ENCODE measurements at regions of chr21 and their contacts with region 1.

Region 1: DNA sequence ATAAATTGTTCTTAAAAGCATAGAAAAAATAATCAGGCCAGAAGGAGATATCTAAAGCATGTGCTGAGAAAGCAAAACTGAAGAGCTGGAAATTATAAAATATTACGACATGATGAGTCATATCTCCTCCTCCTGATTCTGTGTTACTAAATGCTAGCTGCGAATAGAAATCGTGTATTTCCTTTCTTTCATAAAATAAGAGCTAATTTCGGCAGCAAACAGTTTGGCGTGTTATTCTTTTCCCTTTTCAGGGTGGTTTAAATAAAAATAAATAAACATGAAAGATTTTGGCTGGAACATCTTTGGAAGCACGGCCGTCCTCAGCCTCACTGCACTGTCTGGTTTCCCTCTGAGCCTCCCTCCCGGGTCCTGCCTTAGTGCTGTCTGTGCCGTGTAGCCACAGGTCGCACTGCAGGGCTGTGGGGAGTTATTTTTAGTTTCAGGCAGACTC is 56.0 kb downstream of the ADARB1 start:
- DNase-seq: no peak
- H3K4me3 ChIP-seq: no peak overlapping the region
- H3K4me3 Mint-ChIP-seq: no peak overlapping the region
- H3K27ac Mint-ChIP-seq: no peak overlapping the region
- H3K4me1 ChIP-seq: no peaks in the 10 kb centered on the region
- H3K4me1 Mint-ChIP-seq: no peaks in the 10 kb centered on the region
- H3K27me3 ChIP-seq: no peaks in the 10 kb centered on the region
- H3K27me3 Mint-ChIP-seq: no peaks in the 10 kb centered on the region
- CTCF ChIP-seq: no peak

Region 2: GRCh38 chr21:44949779-44950198 is 180.6 kb before region 1 on chr21:
- CTCF ChIA-PET with region 1: interaction called, 26 read pairs
- POLR2A ChIA-PET with region 1: no interaction called
- intact Hi-C with region 1: loop called (anchors 2 kb)
- DNase-seq: peak; percentile 87 to 90
- H3K4me3 ChIP-seq: no peak overlapping the region
- H3K4me3 Mint-ChIP-seq: no peak overlapping the region
- H3K27ac Mint-ChIP-seq: no peak overlapping the region
- H3K4me1 ChIP-seq: peaks cover 5% of the 10 kb centered on the region; the same call in 1 of the 2 replicates
- H3K4me1 Mint-ChIP-seq: no peaks in the 10 kb centered on the region
- H3K27me3 ChIP-seq: no peaks in the 10 kb centered on the region
- H3K27me3 Mint-ChIP-seq: no peaks in the 10 kb centered on the region
- CTCF ChIP-seq: peak; percentile 82 to 91

Region 3: DNA sequence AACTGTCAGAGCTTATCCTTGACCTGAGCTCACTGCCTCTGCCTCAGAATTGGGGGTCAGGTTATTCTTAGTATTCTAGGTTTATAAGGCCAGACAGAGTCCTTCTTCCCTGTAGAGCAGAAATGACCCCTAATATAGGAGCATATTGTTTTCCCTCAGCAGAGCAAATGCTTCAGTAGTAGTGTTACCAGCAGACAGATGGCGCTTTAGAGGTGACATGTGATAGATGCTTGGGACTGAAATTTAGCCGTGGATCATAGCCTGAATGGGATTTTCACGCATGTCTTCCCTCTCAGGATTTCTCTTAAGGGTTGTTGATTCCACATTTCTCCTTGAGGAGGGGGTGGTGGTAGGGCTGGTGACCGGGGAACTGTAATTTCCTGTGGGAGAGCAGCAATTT is 31.5 kb before region 1 on chr21:
- CTCF ChIA-PET with region 1: interaction called, 5 read pairs
- POLR2A ChIA-PET with region 1: no interaction called
- intact Hi-C with region 1: loop called (anchors 1 kb)
- DNase-seq: no peak
- H3K4me3 ChIP-seq: no peak overlapping the region
- H3K4me3 Mint-ChIP-seq: no peak overlapping the region
- H3K27ac Mint-ChIP-seq: no peak overlapping the region
- H3K4me1 ChIP-seq: no peaks in the 10 kb centered on the region
- H3K4me1 Mint-ChIP-seq: no peaks in the 10 kb centered on the region
- H3K27me3 ChIP-seq: no peaks in the 10 kb centered on the region
- H3K27me3 Mint-ChIP-seq: no peaks in the 10 kb centered on the region
- CTCF ChIP-seq: peak; percentile 19 to 60

Region 4: GRCh38 chr21:45154511-45155508 is 24.5 kb after region 1 on chr21:
- CTCF ChIA-PET with region 1: no interaction called
- POLR2A ChIA-PET with region 1: no interaction called
- intact Hi-C with region 1: no loop called
- DNase-seq: no peak
- H3K4me3 ChIP-seq: no peak overlapping the region
- H3K4me3 Mint-ChIP-seq: no peak overlapping the region
- H3K27ac Mint-ChIP-seq: no peak overlapping the region
- H3K4me1 ChIP-seq: no peaks in the 10 kb centered on the region
- H3K4me1 Mint-ChIP-seq: no peaks in the 10 kb centered on the region
- H3K27me3 ChIP-seq: no peaks in the 10 kb centered on the region
- H3K27me3 Mint-ChIP-seq: no peaks in the 10 kb centered on the region
- CTCF ChIP-seq: no peak

Measured in Caco-2 (cell line).